ENCODE measurements at regions of chr9 and their contacts with region 1.

Region 1: GRCh38 chr9:20437476-20437875 is 184.8 kb downstream of the MLLT3 start:
- DNase-seq: no peak

Region 2: DNA sequence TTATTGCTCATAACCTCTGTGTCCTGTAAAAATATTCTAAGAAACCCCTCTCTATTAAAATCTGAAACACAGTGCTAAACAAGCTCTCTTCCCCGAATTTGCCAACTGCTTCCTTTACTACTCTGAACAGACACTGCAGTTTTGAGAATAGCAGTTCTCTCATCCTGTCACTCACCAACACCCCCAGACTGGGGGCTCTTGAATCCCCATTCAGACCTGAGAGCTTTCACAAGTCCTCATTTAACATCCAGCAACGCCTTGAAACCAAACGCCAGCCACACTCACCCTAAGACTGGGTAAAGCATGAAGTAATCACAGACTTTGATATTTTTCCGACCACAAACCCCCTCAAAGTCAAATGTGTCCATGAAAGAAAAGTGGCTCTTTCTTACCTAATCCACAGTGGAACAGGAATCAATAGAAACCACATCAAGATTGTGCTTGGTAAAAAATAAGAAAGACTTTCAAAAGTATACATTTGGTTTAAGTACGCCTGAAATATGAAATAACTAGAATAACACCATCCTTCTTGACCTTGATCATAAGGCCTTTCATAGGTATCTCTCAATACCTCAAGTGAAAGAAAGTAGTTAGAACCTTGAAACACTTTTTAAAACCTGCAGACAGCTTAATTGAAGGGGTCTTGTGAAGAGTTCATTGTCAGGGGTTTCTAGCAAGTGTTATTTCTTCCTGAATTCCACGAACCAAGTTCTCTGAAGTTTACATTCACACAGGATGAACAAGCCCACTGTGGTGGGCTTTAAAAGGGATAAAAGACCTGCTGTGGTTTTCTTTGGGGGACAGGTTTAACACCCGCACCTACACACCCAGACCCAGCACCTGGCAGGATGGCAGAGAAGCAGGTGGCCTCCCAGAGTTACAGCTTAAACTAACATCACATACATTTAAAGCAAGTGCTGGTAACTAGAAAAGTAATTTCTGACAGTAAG is 227.8 kb before region 1 on chr9:
- intact Hi-C with region 1: no loop called
- DNase-seq: no peak

Region 3: DNA sequence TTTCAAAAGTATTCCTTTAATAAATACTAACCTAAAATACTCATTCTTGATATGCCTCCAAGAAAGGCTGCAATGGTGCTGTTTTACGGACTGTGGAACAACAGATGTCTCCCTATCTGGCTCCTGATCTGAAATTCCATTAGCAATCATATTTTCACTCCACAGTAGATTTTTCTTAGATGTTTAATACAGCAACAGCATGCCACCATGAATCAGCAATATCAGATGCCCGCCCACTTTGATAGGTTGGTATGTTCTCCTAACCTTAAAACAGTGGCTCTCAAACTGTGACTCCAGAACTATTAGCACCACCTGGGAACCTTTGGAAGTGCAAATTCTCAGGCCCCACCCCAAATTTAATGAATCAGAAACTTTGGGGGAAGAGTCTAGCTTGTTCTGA is 74.6 kb after region 1 on chr9:
- intact Hi-C with region 1: loop called in 1 of 2 experiments (anchors 10 kb)
- DNase-seq: no peak

Measured in posterior vena cava (tissue), 2 donors.